ENCODE measurements at regions of chr3 and their contacts with region 1.

Region 1: GRCh38 chr3:131494706-131495105 is 8.1 kb downstream of the MRPL3 start:
- DNase-seq: no peak
- H3K4me3 Mint-ChIP-seq: no peak overlapping the region
- H3K27ac Mint-ChIP-seq: no peak overlapping the region
- H3K4me1 Mint-ChIP-seq: peaks cover 23% of the 10 kb centered on the region
- H3K27me3 Mint-ChIP-seq: no peaks in the 10 kb centered on the region

Region 2: DNA sequence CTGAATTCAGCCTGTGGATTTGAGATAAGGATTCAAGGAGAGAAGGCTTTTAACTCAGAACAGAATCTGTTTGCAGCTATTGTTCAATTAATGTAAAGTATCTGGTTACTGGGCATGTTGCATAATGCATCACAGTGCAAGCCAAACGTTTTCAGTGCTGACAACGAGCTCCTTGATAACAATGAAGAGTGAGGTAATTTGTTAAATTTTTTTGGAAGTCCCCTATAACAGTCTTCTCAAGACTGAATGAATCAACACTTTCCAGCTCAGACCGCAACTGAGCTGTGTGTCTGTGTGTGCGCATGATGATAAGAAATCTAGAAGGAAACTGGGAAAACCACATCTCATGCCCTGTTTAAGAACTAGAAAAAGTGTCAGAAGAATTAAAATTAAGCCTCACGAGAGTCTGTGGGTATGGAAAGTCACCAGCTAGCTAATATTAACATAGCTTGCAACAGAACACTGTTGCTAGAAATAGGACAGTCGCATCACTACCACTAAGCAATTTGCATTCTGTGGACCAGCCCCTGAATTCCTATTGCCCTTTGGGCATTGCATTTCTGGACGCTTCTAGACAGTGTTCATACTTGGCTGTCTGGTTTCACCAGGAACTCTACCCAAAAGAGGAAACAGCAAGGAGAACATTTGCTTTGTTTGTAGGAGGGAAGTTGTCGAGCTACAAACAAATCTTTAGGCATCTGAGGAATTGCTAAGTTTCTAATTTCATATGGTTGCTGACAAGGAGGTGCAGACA is 644.5 kb before region 1 on chr3:
- intact Hi-C with region 1: loop called (anchors 1 kb)
- DNase-seq: peak; percentile 54
- H3K4me3 Mint-ChIP-seq: peak overlapping the region; percentile 28
- H3K27ac Mint-ChIP-seq: peak overlapping the region; percentile 71
- H3K4me1 Mint-ChIP-seq: peaks cover 33% of the 10 kb centered on the region
- H3K27me3 Mint-ChIP-seq: peaks cover 15% of the 10 kb centered on the region

Region 3: GRCh38 chr3:131535596-131535995 is 40.9 kb after region 1 on chr3:
- intact Hi-C with region 1: no loop called
- DNase-seq: no peak
- H3K4me3 Mint-ChIP-seq: no peak overlapping the region
- H3K27ac Mint-ChIP-seq: no peak overlapping the region
- H3K4me1 Mint-ChIP-seq: no peaks in the 10 kb centered on the region
- H3K27me3 Mint-ChIP-seq: peaks cover 52% of the 10 kb centered on the region